ENCODE measurements at regions of chr10 and their contacts with region 1.

Region 1: GRCh38 chr10:103800789-103801540 is 54.4 kb downstream of the SH3PXD2A start:
- DNase-seq: no peak
- H3K4me3 ChIP-seq: no peak overlapping the region
- H3K27ac ChIP-seq: no peak overlapping the region
- H3K4me1 ChIP-seq: peaks cover 0 to 14% (median 7%) of the 10 kb centered on the region in 4 experiments; a peak in 4 of 7 replicates
- H3K27me3 ChIP-seq: no peaks in the 10 kb centered on the region
- CTCF ChIP-seq: no peak
- EP300 ChIP-seq: no peak
- POLR2A ChIP-seq: no peak
- RAD21 ChIP-seq: no peak

Region 2: GRCh38 chr10:103789771-103790201 is 11.2 kb before region 1 on chr10:
- CTCF ChIA-PET with region 1: interaction called, 17 read pairs
- POLR2A ChIA-PET with region 1: no interaction called
- DNase-seq: no peak
- H3K4me3 ChIP-seq: no peak overlapping the region
- H3K27ac ChIP-seq: no peak overlapping the region
- H3K4me1 ChIP-seq: no peaks in the 10 kb centered on the region; a peak in 2 of 7 replicates
- H3K27me3 ChIP-seq: no peaks in the 10 kb centered on the region
- CTCF ChIP-seq: no peak
- EP300 ChIP-seq: no peak
- POLR2A ChIP-seq: no peak
- RAD21 ChIP-seq: no peak

Region 3: DNA sequence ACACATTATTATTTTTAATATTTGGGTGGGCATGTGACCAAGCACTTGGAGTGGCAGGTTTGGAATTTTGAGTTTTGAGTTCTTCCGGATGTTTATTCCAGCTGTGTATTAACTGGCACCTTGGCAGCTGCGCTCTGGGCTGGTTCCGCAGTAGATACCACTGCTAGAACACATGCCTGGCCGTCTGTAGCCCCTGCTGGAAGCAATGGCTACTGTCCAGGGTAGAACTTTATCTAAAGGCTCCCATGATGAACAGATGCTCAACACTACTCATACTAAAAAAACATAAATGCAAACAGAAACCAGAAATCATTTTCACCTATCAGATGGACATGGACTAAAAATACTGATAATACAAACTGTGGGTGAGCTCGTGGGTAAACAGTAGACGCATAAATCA is 73.8 kb after region 1 on chr10:
- CTCF ChIA-PET with region 1: no interaction called
- POLR2A ChIA-PET with region 1: no interaction called
- DNase-seq: no peak
- H3K4me3 ChIP-seq: no peak overlapping the region
- H3K27ac ChIP-seq: no peak overlapping the region
- H3K4me1 ChIP-seq: peaks cover 0 to 8% (median 1%) of the 10 kb centered on the region in 4 experiments; a peak in 1 of 7 replicates
- H3K27me3 ChIP-seq: no peaks in the 10 kb centered on the region
- CTCF ChIP-seq: peak in 1 of 3 experiments; percentile 2; a peak in 1 of 4 replicates
- EP300 ChIP-seq: no peak
- POLR2A ChIP-seq: no peak
- RAD21 ChIP-seq: no peak